B cell (primary cell): ENCODE measurements at regions of chr11 and their contacts with region 1.

Region 1: GRCh38 chr11:112074026-112074811 is at the start of gene NKAPD1:
- DNase-seq: peak; percentile 95
- ATAC-seq: peak; percentile 85
- H3K4me3 ChIP-seq: peak within 1 kb of the TSS; percentile 78 to 98 (median 81)
- H3K4me3 Mint-ChIP-seq: peak within 1 kb of the TSS; percentile 97
- H3K27ac ChIP-seq: peak within 1 kb of the TSS; percentile 53 to 88
- H3K27ac Mint-ChIP-seq: peak within 1 kb of the TSS; percentile 97
- H3K4me1 ChIP-seq: peaks cover 12 to 13% of the 10 kb centered on the region in 2 donors
- H3K4me1 Mint-ChIP-seq: peaks cover 31% of the 10 kb centered on the region
- H3K27me3 ChIP-seq: no peaks in the 10 kb centered on the region
- H3K27me3 Mint-ChIP-seq: peaks cover 3% of the 10 kb centered on the region
- CTCF ChIP-seq: peak; percentile 23
- total RNA-seq, gene NKAPD1: 22.8 and 23.4 TPM in 2 replicates

Region 2: GRCh38 chr11:111949519-111950426 is 124.4 kb before region 1 on chr11:
- CTCF ChIA-PET with region 1: no interaction called
- POLR2A ChIA-PET with region 1: no interaction called
- intact Hi-C with region 1: no loop called
- DNase-seq: no peak
- ATAC-seq: no peak
- H3K4me3 ChIP-seq: no peak overlapping the region
- H3K4me3 Mint-ChIP-seq: no peak overlapping the region
- H3K27ac ChIP-seq: no peak overlapping the region
- H3K27ac Mint-ChIP-seq: no peak overlapping the region
- H3K4me1 ChIP-seq: peaks cover 10 to 12% of the 10 kb centered on the region in 2 donors
- H3K4me1 Mint-ChIP-seq: peaks cover 10% of the 10 kb centered on the region
- H3K27me3 ChIP-seq: no peaks in the 10 kb centered on the region
- H3K27me3 Mint-ChIP-seq: no peaks in the 10 kb centered on the region
- CTCF ChIP-seq: no peak

Region 3: GRCh38 chr11:112050721-112051120 is 23.5 kb before region 1 on chr11:
- CTCF ChIA-PET with region 1: no interaction called
- POLR2A ChIA-PET with region 1: no interaction called
- intact Hi-C with region 1: loop called (anchors 2 kb)
- DNase-seq: peak; percentile 49
- ATAC-seq: peak; percentile 51
- H3K4me3 ChIP-seq: peak overlapping the region in 1 of 5 experiments; percentile 16
- H3K4me3 Mint-ChIP-seq: peak overlapping the region; percentile 42
- H3K27ac ChIP-seq: peak overlapping the region; percentile 0 to 75
- H3K27ac Mint-ChIP-seq: peak overlapping the region; percentile 75
- H3K4me1 ChIP-seq: peaks cover 39 to 40% of the 10 kb centered on the region in 2 donors
- H3K4me1 Mint-ChIP-seq: peaks cover 48% of the 10 kb centered on the region
- H3K27me3 ChIP-seq: no peaks in the 10 kb centered on the region
- H3K27me3 Mint-ChIP-seq: no peaks in the 10 kb centered on the region
- CTCF ChIP-seq: no peak

Region 4: DNA sequence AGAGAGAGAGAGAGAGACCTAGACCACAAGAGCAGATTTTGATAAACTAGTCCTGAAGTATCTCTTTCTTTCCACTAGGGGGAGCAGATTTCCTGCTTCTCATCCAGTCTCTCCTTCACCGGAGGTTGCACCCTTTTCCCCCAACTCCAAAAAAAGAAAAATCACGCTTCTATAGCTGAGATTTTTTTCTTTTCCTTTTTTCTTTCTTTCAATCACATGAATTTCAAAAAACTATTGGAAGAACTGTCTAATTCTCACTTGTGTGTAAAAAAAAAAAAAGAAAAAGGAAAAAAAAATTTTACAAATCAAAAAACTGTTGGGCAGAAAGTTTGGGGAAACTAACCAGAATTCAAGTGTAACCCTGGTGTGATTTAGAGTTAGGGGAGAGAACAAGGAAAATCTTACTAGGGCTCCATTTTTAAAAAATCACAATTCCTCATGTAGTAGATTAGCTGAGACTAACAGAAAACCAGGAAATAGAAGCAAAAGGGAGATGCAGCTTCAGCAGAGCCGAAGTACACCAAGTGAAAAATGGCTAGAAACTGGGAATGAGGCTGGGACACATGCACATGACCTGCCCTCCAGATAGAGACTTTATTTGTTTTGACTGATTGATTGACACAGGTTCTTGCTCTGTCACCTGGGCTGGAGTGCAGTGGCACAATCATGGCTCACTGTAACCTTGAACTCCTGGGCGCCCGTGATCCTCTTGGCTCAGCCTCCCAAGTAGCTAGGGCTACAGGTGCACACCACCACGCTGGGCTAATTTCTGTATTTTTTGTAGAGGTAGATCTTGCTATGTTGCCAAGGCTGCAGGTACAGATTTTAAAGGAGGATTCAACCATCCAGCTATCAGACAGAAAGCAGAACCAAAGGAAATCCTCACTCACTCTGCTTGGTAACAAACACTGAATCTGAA is 39.6 kb after region 1 on chr11:
- CTCF ChIA-PET with region 1: no interaction called
- POLR2A ChIA-PET with region 1: no interaction called
- intact Hi-C with region 1: no loop called
- DNase-seq: peak; percentile 53
- ATAC-seq: peak; percentile 68
- H3K4me3 ChIP-seq: no peak overlapping the region
- H3K4me3 Mint-ChIP-seq: no peak overlapping the region
- H3K27ac ChIP-seq: no peak overlapping the region
- H3K27ac Mint-ChIP-seq: no peak overlapping the region
- H3K4me1 ChIP-seq: no peaks in the 10 kb centered on the region
- H3K4me1 Mint-ChIP-seq: no peaks in the 10 kb centered on the region
- H3K27me3 ChIP-seq: no peaks in the 10 kb centered on the region
- H3K27me3 Mint-ChIP-seq: no peaks in the 10 kb centered on the region
- CTCF ChIP-seq: peak; percentile 83

Region 5: DNA sequence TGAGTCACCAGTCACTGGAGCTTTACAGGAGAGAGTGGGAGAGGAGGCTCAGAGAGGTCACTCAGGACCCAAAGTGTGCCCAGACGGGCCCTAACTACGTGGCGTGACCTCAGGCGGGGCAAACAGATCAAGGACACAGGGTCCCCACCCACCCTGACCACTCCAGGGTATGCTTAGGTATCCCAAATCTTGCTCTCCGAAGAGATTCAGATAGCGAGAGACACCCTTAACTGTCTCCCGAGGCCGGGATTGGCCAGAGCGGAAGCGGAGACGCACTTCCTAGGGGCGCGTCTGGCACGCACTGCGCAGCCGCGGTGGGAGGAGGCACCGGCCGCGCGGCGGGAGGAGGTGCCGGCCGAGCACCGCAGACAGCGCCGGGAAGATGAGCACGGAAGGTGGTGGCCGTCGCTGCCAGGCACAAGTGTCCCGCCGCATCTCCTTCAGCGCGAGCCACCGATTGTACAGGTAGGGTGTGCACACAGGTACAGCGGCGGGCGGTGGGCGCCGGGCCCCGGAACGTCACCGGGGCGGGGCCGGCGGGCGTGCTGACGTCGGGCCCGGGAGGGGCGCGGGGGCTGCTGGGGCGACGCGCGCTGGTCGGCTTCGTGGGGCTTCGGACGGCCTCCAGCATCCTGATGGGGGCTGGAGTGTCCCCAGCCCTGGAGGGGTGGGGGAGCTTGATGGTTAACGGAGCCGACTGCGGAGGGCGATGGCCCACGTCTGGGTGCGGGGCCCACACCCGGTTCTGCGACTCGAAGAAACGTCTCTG is 152.0 kb after region 1 on chr11 and contains the start of gene PTS:
- CTCF ChIA-PET with region 1: no interaction called
- POLR2A ChIA-PET with region 1: no interaction called
- intact Hi-C with region 1: loop called (anchors 1 kb)
- DNase-seq: peak; percentile 94
- ATAC-seq: peak; percentile 90
- H3K4me3 ChIP-seq: peak within 1 kb of the TSS; percentile 82 to 98 (median 92)
- H3K4me3 Mint-ChIP-seq: peak within 1 kb of the TSS; percentile 95
- H3K27ac ChIP-seq: peak within 1 kb of the TSS; percentile 99
- H3K27ac Mint-ChIP-seq: peak within 1 kb of the TSS; percentile 99
- H3K4me1 ChIP-seq: peaks cover 10 to 18% of the 10 kb centered on the region in 2 donors
- H3K4me1 Mint-ChIP-seq: peaks cover 23% of the 10 kb centered on the region
- H3K27me3 ChIP-seq: no peaks in the 10 kb centered on the region
- H3K27me3 Mint-ChIP-seq: no peaks in the 10 kb centered on the region
- CTCF ChIP-seq: no peak
- total RNA-seq, gene PTS: 36.2 and 36.7 TPM in 2 replicates